Naive thymus-derived CD4-positive, alpha-beta T cell (primary cell): ENCODE measurements at regions of chr17 and their contacts with region 1.

Region 1: GRCh38 chr17:34840750-34841149 is 120.5 kb downstream of the CCT6B start:
- DNase-seq: peak in 7 of 9 donors; percentile 25 to 64 (median 61)
- ATAC-seq: peak; percentile 61
- H3K4me3 ChIP-seq: peak overlapping the region; percentile 17
- H3K4me3 Mint-ChIP-seq: peak overlapping the region in 7 of 10 donors; percentile 22 to 70 (median 52)
- H3K27ac ChIP-seq: peak overlapping the region; percentile 30
- H3K27ac Mint-ChIP-seq: peak overlapping the region in 7 of 9 donors; percentile 81 to 94 (median 89)
- H3K4me1 ChIP-seq: peaks cover 4 to 51% of the 10 kb centered on the region in 2 donors
- H3K4me1 Mint-ChIP-seq: peaks cover 0 to 21% (median 6%) of the 10 kb centered on the region in 7 donors
- H3K27me3 ChIP-seq: no peaks in the 10 kb centered on the region
- H3K27me3 Mint-ChIP-seq: peaks cover 0 to 6% (median 0%) of the 10 kb centered on the region in 5 donors

Region 2: GRCh38 chr17:34781571-34782108 is 59.1 kb before region 1 on chr17:
- CTCF ChIA-PET with region 1: no interaction called
- POLR2A ChIA-PET with region 1: no interaction called
- intact Hi-C with region 1: no loop called
- DNase-seq: no peak
- ATAC-seq: no peak
- H3K4me3 ChIP-seq: no peak overlapping the region
- H3K4me3 Mint-ChIP-seq: no peak overlapping the region
- H3K27ac ChIP-seq: no peak overlapping the region
- H3K27ac Mint-ChIP-seq: no peak overlapping the region
- H3K4me1 ChIP-seq: no peaks in the 10 kb centered on the region
- H3K4me1 Mint-ChIP-seq: peaks cover 0 to 5% (median 0%) of the 10 kb centered on the region in 7 donors
- H3K27me3 ChIP-seq: no peaks in the 10 kb centered on the region
- H3K27me3 Mint-ChIP-seq: peaks cover 0 to 2% (median 0%) of the 10 kb centered on the region in 5 donors

Region 3: DNA sequence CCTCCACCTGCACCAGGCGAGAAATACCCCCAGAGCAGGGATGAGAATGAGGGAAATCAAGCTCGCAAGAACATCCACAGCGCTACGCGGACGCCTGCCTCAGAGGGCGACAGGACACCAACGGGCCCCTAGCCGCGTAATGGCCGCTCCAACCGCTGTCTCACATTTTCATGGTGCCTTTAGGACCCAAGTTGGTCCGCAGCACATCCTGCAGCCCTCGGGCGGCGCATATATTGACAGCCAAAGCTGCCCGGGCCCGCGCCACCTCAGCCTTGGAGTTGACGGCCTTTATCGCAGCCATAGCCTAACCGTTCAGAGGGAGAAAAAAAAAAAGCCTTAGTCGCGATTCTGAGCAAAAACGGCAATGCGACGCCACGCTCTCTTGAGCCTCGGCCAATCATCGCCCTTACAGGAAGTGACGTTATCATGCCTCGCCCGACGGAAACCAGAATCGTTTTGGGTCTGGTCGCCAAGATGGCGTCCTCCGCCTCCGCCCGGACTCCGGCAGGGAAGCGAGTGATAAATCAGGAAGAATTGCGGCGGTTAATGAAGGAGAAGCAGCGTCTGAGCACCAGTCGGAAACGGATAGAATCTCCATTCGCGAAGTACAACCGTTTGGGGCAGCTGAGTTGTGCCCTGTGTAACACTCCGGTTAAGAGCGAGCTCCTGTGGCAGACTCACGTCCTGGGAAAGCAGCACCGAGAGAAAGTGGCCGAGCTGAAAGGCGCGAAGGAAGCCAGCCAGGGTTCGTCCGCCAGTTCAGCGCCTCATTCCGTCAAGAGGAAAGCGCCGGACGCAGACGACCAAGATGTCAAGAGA is 120.6 kb after region 1 on chr17 and contains the starts of genes CCT6B and ZNF830:
- CTCF ChIA-PET with region 1: no interaction called
- POLR2A ChIA-PET with region 1: interaction called, 3 read pairs
- intact Hi-C with region 1: loop called in 1 of 2 experiments (anchors 1 kb)
- DNase-seq: peak; percentile 69 to 94 (median 91)
- ATAC-seq: peak; percentile 95
- H3K4me3 ChIP-seq: peak within 1 kb of the TSS; percentile 94
- H3K4me3 Mint-ChIP-seq: peak within 1 kb of the TSS; percentile 97 to 100 (median 99)
- H3K27ac ChIP-seq: peak within 1 kb of the TSS; percentile 92
- H3K27ac Mint-ChIP-seq: peak within 1 kb of the TSS; percentile 98 to 100 (median 99)
- H3K4me1 ChIP-seq: peaks cover 14 to 16% of the 10 kb centered on the region in 2 donors
- H3K4me1 Mint-ChIP-seq: peaks cover 19 to 38% (median 33%) of the 10 kb centered on the region in 7 donors
- H3K27me3 ChIP-seq: no peaks in the 10 kb centered on the region
- H3K27me3 Mint-ChIP-seq: peaks cover 0 to 10% (median 5%) of the 10 kb centered on the region in 5 donors
- total RNA-seq, gene CCT6B: 1.6 to 3.8 (median 2.4) TPM
- total RNA-seq, gene ZNF830: 26.9 to 47.3 (median 44.9) TPM